ENCODE measurements at regions of chrX and their contacts with region 1.

Region 1: GRCh38 chrX:38260231-38260630 is 39.6 kb upstream of the SRPX start:
- DNase-seq: no peak
- ATAC-seq: no peak
- H3K4me3 ChIP-seq: no peak overlapping the region
- H3K27ac ChIP-seq: no peak overlapping the region
- H3K4me1 ChIP-seq: no peaks in the 10 kb centered on the region
- H3K27me3 ChIP-seq: peaks cover 0 to 12% (median 0%) of the 10 kb centered on the region in 7 donors
- CTCF ChIP-seq: peak in 2 of 9 donors; percentile 13 to 42

Region 2: DNA sequence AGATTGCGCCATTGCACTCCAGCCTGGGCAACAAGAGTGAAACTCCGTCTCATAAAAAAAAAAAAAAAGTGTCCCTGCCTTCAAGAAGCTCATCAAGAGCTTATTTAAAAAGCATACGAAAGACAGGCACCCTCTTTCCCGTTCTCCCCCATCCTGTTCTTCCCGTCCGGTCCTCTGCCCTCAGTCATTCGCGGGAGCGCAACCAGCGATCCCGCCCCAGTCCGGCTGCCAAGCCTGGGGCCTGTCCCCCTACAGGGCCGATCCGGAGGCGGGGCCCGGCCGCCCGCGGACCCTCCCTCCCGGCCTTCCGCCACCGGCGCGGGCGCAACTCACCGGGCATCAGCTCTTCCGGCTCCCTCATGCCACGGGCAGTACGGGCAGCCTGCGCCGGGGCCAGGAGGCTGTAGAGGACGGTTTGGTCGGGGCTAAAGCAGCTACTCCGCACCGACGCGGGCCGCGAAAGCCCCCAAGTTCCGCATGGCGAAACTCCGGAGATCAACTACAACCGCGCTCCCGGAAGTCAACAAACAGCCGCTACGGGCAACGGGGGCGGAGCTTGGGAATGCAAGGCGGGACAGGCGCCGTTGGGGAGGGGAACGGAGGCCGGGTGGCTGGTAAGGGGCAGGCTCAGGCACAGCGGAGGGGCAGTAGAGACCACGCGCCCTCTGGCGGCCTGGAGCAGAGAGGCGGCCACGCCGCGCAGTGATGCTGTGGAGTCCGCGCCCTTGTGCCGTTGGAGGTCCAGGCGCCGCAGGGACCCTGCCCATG is 67.0 kb after region 1 on chrX and contains the start of gene RPGR:
- intact Hi-C with region 1: loop called in 1 of 10 experiments (anchors 10 kb)
- DNase-seq: peak; percentile 93 to 94
- ATAC-seq: peak; percentile 98 to 99 (median 99)
- H3K4me3 ChIP-seq: peak within 1 kb of the TSS; percentile 46 to 89 (median 75)
- H3K27ac ChIP-seq: peak within 1 kb of the TSS; percentile 75 to 89 (median 85)
- H3K4me1 ChIP-seq: peaks cover 0 to 10% (median 0%) of the 10 kb centered on the region in 9 donors
- H3K27me3 ChIP-seq: no peaks in the 10 kb centered on the region
- CTCF ChIP-seq: peak; percentile 52 to 84 (median 75)
- total RNA-seq, gene RPGR: 3.8 to 10.2 (median 5.5) TPM

Measured in heart right ventricle (tissue), 16 donors.